Common myeloid progenitor, CD34-positive (primary cell): ENCODE measurements at regions of chr1 and their contacts with region 1.

Region 1: DNA sequence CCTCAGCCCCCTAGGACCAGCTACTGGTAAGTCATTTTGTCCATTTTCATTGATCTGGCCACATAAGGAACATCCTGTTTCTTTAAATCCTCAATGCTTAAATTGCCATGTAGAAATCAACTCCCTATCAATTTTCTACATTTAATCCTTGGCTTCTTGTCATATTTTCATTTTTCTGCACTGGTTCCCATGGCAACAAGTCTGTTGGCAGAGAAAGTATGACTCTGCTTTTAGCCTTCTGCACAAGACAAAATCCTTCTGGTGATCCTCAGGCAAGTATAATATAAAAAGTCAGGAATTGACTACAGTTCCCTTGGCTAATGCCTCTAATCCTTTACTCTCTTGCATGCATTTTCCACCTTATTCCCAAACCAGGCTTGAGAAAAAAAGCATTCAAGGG is 65.0 kb downstream of the LRRC40 start:
- DNase-seq: peak; percentile 10 to 57 (median 49)
- H3K4me3 ChIP-seq: no peak overlapping the region
- H3K27ac ChIP-seq: no peak overlapping the region
- H3K4me1 ChIP-seq: peaks cover 0 to 2% (median 0%) of the 10 kb centered on the region in 4 experiments
- H3K27me3 ChIP-seq: peaks cover 0 to 2% (median 0%) of the 10 kb centered on the region in 5 experiments

Region 2: DNA sequence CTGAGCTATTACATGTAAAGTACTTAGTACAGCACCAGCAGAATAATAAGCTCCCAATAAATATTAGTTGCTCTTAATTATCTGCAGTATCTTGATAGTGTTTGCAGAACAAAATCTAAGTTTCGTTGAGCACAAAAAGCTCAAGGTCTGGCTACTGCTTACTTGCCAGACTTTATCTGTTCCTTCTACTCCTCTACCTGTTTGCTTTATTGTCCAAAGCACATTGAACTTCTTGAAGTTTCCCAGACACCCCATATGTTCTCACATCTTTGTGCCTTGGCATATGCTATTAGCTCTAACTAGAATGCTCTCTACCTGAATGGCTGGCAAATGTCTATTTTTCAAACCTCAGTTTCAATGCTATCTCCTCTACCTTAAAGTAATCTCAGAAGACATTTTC is 10.1 kb after region 1 on chr1:
- CTCF ChIA-PET with region 1: interaction called, 10 read pairs
- POLR2A ChIA-PET with region 1: no interaction called
- DNase-seq: no peak
- H3K4me3 ChIP-seq: no peak overlapping the region
- H3K27ac ChIP-seq: no peak overlapping the region
- H3K4me1 ChIP-seq: no peaks in the 10 kb centered on the region
- H3K27me3 ChIP-seq: no peaks in the 10 kb centered on the region

Region 3: DNA sequence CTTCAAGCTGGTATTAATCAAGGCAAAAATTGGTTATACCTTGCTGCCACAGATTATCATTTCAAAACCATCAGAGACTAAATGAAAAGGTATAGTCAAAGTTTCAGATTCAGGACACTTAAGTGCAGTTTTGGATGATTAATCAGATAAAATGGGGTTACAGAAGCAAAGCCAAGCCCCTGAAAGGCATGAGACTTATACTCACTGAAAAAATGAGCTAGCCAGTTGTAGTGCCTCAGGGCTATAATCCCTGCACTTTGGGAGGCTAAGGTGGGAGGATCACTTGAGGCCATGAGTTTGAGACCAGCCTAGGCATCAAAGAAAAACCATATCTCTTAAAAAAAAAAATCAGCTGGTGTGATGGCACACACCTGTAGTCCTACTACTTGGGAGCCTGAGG is 49.8 kb after region 1 on chr1:
- CTCF ChIA-PET with region 1: no interaction called
- POLR2A ChIA-PET with region 1: no interaction called
- DNase-seq: no peak
- H3K4me3 ChIP-seq: no peak overlapping the region
- H3K27ac ChIP-seq: no peak overlapping the region
- H3K4me1 ChIP-seq: no peaks in the 10 kb centered on the region
- H3K27me3 ChIP-seq: no peaks in the 10 kb centered on the region